A673 (cell line): ENCODE measurements at regions of chrX and their contacts with region 1.

Region 1: DNA sequence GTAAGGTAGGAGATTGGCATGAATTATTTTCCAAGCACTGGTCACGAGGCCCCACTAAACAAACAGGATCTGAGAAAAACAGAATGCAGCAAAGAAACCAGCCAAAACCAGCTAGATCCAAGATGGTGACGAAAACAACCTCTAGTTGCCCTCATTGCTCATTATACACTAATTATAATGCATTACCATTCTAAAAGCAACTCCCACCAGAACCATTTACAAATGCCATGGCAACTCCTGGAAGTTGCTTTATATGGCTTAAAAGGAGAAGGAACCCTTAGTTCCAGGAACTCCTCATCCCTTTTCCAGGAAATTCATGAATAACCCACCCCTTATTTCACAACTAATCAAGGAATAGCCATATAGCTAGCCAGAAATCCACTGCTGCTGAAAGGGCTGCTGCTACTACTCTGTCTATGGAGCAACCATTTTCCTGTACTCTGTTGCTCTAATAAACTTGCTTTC is 69.3 kb downstream of the ABCB7 start:
- DNase-seq: no peak
- H3K4me3 ChIP-seq: no peak overlapping the region
- H3K27ac ChIP-seq: no peak overlapping the region
- H3K4me1 ChIP-seq: no peaks in the 10 kb centered on the region
- H3K27me3 ChIP-seq: no peaks in the 10 kb centered on the region
- CTCF ChIP-seq: no peak

Region 2: DNA sequence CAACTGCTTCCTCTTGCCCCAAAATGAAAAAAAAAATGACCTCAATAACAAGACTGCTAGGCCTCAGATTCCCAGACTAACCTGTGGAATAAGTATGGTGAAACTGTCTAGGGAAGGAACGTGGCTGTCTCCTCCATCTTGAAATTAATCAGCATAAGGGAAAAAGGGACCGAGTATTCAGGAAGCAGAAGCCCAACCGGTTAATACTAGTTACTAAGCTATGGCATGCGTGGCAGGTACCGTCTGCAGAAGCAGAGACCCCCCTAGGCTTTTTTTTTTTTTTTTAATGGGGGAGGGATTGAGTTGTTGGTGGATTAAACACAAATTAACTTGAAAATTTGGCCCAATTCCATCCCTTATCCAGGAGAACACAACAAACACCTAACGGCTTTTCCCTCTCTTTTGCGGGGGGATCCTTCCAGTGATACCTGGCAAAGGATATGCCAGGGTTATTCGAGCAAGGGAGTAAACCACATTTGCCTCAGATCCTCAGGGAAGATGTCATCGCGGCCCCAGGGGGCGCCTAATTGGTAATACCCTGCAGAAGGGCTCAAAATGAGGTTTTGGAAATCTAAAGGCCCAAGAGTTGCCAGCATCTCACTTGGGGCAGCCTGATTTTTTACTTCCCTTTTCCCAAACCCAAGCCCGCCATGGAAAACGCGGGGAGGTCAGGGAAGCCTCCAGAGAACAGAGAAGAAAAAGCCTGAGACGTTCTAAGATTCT is 473.2 kb before region 1 on chrX:
- CTCF ChIA-PET with region 1: no interaction called
- POLR2A ChIA-PET with region 1: interaction called, 18 read pairs
- intact Hi-C with region 1: no loop called
- DNase-seq: peak; percentile 31
- H3K4me3 ChIP-seq: peak overlapping the region; percentile 75
- H3K27ac ChIP-seq: peak overlapping the region; percentile 99
- H3K4me1 ChIP-seq: no peaks in the 10 kb centered on the region
- H3K27me3 ChIP-seq: no peaks in the 10 kb centered on the region
- CTCF ChIP-seq: no peak